Left cardiac atrium (tissue), 4 donors: ENCODE measurements at regions of chr11 and their contacts with region 1.

Region 1: DNA sequence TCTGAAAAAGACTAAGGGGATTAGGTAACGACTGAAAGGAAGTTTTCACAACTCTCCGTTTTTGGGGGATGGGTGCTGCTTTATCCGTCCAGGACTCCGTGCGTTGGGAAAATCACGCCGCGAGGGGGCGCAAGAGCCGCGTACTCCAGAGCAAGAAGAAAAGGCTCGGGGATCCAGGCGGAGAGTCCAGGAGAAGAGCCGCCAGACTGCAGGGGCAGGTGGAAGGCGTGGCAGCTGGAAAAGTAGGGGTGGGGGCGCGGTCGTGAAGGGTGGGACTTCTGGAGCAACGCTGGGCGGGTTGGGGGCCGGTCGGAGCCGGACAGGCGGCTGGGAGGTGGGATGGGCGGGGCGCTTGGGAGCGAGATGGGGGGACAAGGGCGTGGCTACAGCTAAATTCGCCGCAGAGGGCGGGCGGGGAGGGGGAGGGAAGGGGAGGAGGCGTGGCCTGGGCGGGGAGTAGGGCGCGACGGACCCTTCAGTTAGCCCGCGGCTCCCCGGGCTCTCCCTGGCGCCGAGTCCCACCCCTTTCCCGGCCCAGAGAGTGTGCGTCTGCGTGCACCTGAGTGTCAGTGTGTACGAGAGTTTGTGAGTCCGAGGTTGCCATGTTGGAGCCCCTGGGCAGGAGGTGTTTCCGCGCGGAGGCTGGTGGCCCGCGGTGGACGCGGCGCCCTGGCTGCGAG is 613 bp upstream of the ARHGEF17 start:
- DNase-seq: peak; percentile 98
- ATAC-seq: peak; percentile 62 to 75

Region 2: GRCh38 chr11:73242251-73243079 is 65.0 kb before region 1 on chr11:
- intact Hi-C with region 1: no loop called
- DNase-seq: peak; percentile 83
- ATAC-seq: peak; percentile 66 to 83

Region 3: DNA sequence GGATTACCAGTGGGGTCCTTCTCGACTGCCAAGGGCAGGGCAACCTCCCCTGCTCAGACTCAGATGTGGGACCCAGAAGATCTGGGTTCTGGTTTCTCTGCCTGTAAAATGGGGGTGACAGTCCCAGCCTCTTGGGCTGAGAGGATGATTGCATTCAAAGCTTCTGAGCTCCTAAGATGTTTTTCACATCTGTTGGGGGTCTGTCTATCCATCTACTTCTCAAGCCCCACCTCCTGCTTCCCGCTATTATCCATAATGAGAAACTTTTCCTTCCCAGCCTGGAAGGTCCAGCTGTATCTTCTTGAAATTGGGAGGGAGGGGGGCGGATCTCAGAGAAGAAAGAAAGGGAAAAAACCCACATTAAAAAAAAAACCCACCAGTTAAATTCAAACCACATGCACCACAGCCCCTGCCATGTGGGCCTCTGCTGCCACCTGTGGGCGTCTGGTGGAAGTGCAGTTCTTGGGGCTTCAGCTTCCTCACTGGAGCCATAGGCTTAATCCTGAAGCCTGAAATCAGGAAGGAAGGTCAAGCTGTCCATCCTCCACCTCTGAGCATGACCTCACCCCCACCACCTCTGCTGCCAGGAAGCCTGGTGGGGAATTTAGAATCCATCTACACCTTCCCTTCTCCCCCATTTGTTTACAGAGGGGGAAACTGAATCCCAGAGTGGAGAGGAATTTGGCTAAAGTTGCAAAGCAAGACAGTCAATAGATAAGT is 27.9 kb after region 1 on chr11:
- intact Hi-C with region 1: loop called (anchors 1 to 5 kb)
- DNase-seq: peak; percentile 80
- ATAC-seq: peak; percentile 67 to 70

Region 4: GRCh38 chr11:73393479-73394380 is 86.3 kb after region 1 on chr11:
- intact Hi-C with region 1: loop called in 1 of 2 experiments (anchors 5 kb)
- DNase-seq: peak; percentile 72
- ATAC-seq: peak; percentile 61 to 74